A673 (cell line): ENCODE measurements at regions of chr11 and their contacts with region 1.

Region 1: DNA sequence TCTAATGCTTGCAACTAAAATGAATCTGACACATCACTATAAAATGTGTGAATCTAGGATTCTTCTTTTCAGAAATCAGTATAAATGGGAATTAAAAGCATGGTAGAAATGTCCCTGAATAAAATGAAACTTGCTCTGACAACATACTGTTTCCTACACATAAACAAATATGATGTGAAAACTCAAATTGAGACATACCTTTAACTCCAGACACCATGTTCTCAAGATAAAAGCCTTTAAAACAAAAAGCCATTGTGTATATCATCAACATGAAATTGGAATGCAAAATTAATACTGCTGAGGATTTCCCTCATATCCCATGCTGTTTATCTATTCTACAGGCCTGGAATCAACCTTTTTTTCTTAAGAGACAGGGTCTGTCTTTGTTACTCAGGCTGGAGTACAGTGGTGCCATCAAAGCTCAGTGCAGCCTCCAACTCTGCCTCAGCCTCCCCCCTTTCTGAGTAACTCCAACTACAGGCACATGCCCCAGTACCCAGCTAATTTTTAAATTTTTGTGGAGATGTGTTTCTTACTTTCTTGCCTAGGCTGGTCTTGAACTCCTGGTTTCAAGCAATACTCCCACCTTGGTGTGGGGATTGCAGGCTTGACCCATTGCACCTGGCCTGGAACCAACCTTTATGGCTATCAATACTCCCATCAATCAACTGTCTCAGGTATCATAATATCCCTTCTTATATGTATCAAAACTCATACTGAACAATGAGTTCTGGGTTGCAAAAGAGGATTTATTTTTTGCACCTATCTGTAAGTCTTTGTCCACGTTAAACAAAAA is 6.7 kb downstream of the TAF1D start:
- DNase-seq: no peak
- H3K4me3 ChIP-seq: no peak overlapping the region
- H3K27ac ChIP-seq: peak overlapping the region; percentile 20
- H3K4me1 ChIP-seq: peaks cover 42% of the 10 kb centered on the region
- H3K27me3 ChIP-seq: no peaks in the 10 kb centered on the region
- CTCF ChIP-seq: no peak

Region 2: DNA sequence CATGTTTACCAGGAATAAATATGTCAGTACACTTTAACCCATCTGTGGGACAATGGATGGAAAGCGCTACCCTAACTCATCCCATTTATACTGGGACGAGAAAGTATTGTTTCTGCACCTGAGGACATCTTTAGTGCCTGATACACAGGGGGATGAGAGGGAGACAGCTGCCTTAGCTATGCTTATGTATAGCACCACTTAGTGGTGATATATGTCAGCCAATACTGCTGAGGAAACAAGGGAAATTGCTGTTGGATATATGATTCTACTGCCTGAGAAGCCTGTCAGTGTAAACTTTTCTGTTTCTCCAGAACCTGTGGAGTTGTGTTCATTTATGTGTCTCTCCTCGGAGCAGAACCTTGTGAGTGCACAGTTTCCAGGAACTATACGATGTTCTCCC is 86.5 kb before region 1 on chr11:
- CTCF ChIA-PET with region 1: no interaction called
- POLR2A ChIA-PET with region 1: no interaction called
- intact Hi-C with region 1: no loop called
- DNase-seq: peak; percentile 43
- H3K4me3 ChIP-seq: no peak overlapping the region
- H3K27ac ChIP-seq: no peak overlapping the region
- H3K4me1 ChIP-seq: no peaks in the 10 kb centered on the region
- H3K27me3 ChIP-seq: peaks cover 2% of the 10 kb centered on the region
- CTCF ChIP-seq: peak; percentile 61

Region 3: GRCh38 chr11:93697611-93698010 is 37.0 kb before region 1 on chr11:
- CTCF ChIA-PET with region 1: no interaction called
- POLR2A ChIA-PET with region 1: no interaction called
- intact Hi-C with region 1: loop called (anchors 5 kb)
- DNase-seq: no peak
- H3K4me3 ChIP-seq: no peak overlapping the region
- H3K27ac ChIP-seq: no peak overlapping the region
- H3K4me1 ChIP-seq: no peaks in the 10 kb centered on the region
- H3K27me3 ChIP-seq: no peaks in the 10 kb centered on the region
- CTCF ChIP-seq: no peak

Region 4: GRCh38 chr11:93796441-93797231 is 62.0 kb after region 1 on chr11:
- CTCF ChIA-PET with region 1: no interaction called
- POLR2A ChIA-PET with region 1: no interaction called
- intact Hi-C with region 1: loop called (anchors 5 kb)
- DNase-seq: no peak
- H3K4me3 ChIP-seq: no peak overlapping the region
- H3K27ac ChIP-seq: no peak overlapping the region
- H3K4me1 ChIP-seq: peaks cover 11% of the 10 kb centered on the region
- H3K27me3 ChIP-seq: no peaks in the 10 kb centered on the region
- CTCF ChIP-seq: no peak

Region 5: DNA sequence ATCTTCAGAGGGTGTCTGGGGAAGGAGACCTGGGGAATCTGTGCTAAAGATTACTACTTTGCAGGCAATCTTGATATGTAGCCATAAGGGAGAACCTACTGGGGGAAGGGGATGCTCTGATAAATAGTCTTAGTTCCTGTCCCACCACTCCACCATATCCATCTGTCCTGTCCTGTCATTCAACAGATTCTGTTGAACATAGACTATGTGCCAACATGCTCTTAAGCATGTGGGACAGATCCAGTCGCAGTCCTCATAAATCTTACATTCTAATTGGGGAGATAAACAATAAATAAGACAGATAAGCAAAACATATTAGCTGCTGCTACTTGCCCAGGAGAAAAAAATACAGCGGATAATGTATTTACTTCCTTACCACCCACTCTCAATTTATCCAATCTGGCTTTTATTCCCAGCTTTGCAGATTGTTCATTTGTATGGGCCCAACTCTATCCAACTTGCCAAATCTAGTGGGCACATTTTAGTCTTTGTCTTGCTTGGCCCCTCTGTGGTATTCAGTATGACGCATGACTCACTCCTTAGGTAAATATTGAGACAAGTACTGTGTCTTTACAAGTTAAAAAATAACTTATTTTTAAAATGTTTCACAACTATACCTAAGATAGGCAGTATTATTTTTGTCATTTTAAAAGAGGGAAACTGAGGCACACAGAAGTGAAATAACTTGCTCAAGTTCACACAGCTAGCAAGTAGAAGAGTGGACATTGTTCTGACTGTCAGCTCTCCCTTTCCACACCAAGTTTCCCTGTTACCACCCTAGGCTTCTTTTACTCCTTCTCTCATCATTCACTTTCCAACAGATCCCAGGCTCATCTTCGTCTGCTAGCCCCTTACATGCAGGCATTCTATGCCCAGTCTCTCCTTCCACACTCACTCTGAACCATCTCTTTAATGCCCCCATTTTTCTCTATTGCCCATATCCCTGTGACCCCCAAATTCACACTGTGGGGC is 1630.0 kb after region 1 on chr11:
- CTCF ChIA-PET with region 1: no interaction called
- POLR2A ChIA-PET with region 1: no interaction called
- intact Hi-C with region 1: no loop called
- DNase-seq: no peak
- H3K4me3 ChIP-seq: no peak overlapping the region
- H3K27ac ChIP-seq: no peak overlapping the region
- H3K4me1 ChIP-seq: no peaks in the 10 kb centered on the region
- H3K27me3 ChIP-seq: peaks cover 10% of the 10 kb centered on the region
- CTCF ChIP-seq: no peak